Uterus (tissue), 4 donors: ENCODE measurements at regions of chr2 and their contacts with region 1.

Region 1: DNA sequence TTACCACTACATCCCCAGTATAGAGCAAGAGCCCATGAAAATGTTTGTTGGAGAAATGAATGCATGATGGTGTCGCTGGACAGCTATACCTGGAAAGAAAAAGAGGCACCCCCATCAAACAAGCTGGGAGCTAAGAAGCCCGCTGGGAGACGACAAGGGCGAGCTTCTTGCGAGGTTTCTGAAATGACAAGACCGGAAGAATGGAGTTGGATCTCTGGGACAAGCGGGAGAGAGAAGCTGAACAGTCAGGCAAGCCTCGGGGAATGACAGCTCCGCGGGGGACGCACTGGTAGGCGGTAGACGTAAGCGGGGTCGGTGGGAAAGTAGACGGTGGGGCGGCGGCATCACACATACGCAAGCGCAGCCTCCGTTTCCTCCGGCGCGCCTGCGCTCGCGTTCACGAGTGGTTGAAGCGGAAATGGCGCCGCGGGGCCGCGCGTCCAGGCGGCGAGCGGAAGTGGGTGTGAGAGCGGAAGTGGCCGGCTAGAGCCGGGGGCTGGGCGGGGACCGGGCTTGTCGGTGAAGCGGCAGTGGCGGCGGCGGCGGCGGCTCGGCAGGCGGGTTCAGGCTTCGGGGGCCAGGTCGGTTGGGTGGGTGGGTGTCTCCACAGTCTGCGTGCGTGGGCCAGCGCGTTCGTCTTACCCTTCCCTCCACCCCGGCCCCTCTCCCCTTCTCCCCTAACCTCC is at the start of gene ARPC2:
- DNase-seq: peak; percentile 90 to 95
- H3K4me3 ChIP-seq: peak within 1 kb of the TSS; percentile 96 to 100
- H3K27ac ChIP-seq: peak within 1 kb of the TSS; percentile 92 to 94
- H3K4me1 ChIP-seq: peaks cover 11 to 19% of the 10 kb centered on the region in 2 donors
- H3K27me3 ChIP-seq: no peaks in the 10 kb centered on the region
- CTCF ChIP-seq: peak in 3 of 4 experiments; percentile 26 to 81 (median 51)
- POLR2A ChIP-seq: peak; percentile 87 to 88
- total RNA-seq, gene ARPC2: 87.9 to 162 (median 159) TPM

Region 2: DNA sequence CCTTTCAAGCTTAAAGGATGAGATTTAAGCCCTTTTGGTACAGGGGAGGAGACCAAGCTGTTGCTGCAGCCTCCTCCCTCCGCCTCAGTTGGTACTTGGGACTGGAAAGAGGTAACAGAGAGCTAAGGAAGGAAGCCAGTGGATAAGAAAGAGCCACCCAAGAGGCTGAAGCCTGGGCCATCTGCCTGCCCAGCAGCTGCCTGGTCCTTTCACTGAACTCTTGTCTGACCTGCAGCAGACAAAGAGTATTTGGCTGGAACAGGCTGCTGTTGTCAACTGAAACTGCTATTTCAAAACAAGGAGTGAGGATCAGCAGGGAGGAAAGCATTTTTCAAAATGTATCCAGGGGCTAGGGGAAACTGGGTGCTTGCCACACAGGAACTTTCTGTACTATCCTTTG is 244.3 kb before region 1 on chr2:
- intact Hi-C with region 1: no loop called
- DNase-seq: peak in 1 of 2 donors; percentile 32
- H3K4me3 ChIP-seq: no peak overlapping the region
- H3K27ac ChIP-seq: peak overlapping the region; percentile 62 to 93
- H3K4me1 ChIP-seq: peaks cover 4 to 5% of the 10 kb centered on the region in 2 donors
- H3K27me3 ChIP-seq: no peaks in the 10 kb centered on the region
- CTCF ChIP-seq: no peak
- POLR2A ChIP-seq: no peak

Region 3: DNA sequence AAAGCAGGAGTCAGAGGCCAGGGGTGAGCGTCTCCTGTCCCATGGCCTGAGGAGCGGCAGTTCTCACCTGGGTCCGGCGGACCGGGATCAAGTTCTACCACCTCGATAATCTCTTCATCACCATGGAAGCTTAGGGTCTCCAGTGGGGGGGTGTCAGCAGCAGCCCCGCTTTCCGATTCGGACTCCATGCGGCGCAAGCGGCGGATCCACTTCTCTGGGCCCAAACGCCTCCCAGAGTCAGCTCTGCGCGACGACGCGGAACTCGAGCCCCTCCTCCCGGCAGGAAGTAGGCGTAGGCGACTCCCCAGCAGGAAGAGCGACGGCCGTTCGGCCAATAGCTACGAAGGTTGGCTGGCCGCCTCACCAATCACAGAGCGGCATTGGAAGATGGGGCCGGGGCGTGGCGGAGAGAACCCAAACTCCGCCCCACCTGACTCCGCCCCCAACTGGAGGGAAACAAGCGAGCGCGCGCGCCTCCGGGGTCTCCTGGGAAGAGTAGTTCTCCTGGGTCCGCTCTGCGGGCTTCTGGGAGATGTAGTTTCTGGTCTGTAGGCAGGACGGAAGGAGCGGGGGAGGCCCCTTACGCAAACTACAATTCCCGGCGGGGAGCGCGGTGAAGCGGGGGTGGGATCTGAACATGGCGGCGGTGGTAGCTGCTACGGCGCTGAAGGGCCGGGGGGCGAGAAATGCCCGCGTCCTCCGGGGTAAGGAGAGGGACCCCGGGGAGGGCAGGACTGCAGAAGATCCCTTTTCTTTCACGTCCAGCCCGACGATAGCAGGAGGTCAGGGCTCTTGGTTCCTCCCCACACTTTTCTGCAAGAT is 53.3 kb after region 1 on chr2 and contains the starts of genes AAMP and PNKD:
- intact Hi-C with region 1: loop called (anchors 10 kb)
- DNase-seq: peak; percentile 100
- H3K4me3 ChIP-seq: peak within 1 kb of the TSS; percentile 82 to 85
- H3K27ac ChIP-seq: peak within 1 kb of the TSS; percentile 86
- H3K4me1 ChIP-seq: peaks cover 11 to 22% of the 10 kb centered on the region in 2 donors
- H3K27me3 ChIP-seq: no peaks in the 10 kb centered on the region
- CTCF ChIP-seq: peak; percentile 20 to 37 (median 30)
- POLR2A ChIP-seq: peak; percentile 83
- total RNA-seq, gene AAMP: 79.6 to 160 (median 134) TPM
- total RNA-seq, gene PNKD: 11.8 to 47.8 (median 31.7) TPM

Region 4: GRCh38 chr2:218529990-218530389 is 313.2 kb after region 1 on chr2:
- intact Hi-C with region 1: no loop called
- DNase-seq: no peak
- H3K4me3 ChIP-seq: no peak overlapping the region
- H3K27ac ChIP-seq: no peak overlapping the region
- H3K4me1 ChIP-seq: no peaks in the 10 kb centered on the region
- H3K27me3 ChIP-seq: no peaks in the 10 kb centered on the region
- CTCF ChIP-seq: no peak
- POLR2A ChIP-seq: no peak